ENCODE measurements at regions of chr14 and their contacts with region 1.

Region 1: DNA sequence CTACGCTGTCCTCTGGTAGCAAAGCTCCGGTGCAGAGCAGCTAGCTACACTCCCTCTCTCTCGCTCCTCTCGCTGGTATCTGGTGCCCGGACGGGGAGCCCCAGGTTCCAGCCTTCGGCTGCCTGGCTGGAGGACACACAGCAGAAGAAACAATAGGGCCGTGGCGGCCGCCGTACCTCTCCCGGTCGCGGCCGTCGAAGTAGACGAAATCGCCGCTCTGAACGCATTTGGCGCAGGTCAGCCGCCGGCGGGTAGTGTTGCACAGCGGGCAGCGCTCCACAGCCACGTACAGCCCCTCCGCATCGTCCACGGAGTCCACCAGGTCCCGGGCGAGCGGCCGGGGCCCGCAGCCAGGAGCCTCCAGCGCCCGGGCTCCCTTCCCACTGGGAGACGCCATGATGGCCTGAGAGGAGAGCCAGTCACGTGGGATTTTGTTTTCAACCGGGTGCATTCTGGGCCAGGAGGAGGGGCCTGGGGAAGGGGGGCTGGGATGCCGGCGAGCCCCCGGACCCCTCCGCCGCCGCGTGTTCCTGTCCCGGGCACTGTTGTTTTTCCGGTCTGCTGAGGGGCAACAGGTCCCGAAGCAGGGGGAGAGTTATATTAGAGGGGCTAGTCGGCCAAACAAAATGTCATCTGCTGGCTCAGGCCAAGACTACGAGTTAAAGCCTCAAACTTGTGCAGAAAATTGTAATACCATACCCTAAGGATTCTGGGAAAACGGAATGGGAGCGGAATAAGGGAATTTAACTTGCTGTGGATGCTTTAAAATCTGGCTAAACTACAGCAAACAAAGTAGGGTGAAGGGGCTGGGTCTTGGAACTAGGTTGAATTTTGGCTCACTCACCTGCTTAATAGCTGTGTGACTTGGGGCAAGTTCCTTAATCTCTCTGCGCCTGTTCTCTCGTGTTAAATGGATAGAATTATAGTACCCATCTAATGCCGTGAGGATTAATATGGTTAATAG is at the start of gene ATG14:
- DNase-seq: peak; percentile 48 to 92
- H3K4me3 ChIP-seq: peak within 1 kb of the TSS; percentile 78 to 99
- H3K27ac ChIP-seq: peak within 1 kb of the TSS; percentile 82 to 97
- H3K4me1 ChIP-seq: peaks cover 0 to 22% of the 10 kb centered on the region in 2 donors
- H3K27me3 ChIP-seq: no peaks in the 10 kb centered on the region
- CTCF ChIP-seq: no peak
- total RNA-seq, gene ATG14: 8.4 TPM

Region 2: DNA sequence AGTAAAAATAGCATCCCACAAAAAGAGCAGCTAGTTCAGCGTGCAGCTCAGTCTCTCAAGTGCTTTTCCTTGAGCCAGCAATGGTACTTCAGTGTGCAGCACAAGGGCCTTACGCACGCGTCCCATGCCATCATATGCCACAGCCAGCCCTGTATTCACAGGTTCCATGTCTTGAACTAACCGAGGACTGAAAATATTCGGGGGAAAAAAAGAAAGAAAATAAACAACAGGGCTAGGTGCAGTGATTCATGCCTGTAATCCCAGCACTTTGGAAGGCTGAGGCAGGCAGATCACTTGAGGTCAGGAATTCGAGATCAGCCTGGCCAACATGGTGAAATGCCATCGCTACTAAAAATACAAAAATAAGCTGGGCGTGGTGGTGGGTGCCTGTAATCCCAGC is 28.7 kb before region 1 on chr14:
- intact Hi-C with region 1: loop called (anchors 1 kb)
- DNase-seq: peak; percentile 39 to 85
- H3K4me3 ChIP-seq: peak overlapping the region in 1 of 2 donors; percentile 1
- H3K27ac ChIP-seq: peak overlapping the region; percentile 64 to 86
- H3K4me1 ChIP-seq: peaks cover 15 to 20% of the 10 kb centered on the region in 2 donors
- H3K27me3 ChIP-seq: no peaks in the 10 kb centered on the region
- CTCF ChIP-seq: no peak

Region 3: GRCh38 chr14:55398679-55399078 is 13.0 kb before region 1 on chr14:
- intact Hi-C with region 1: loop called (anchors 1 kb)
- DNase-seq: peak; percentile 28 to 82
- H3K4me3 ChIP-seq: no peak overlapping the region
- H3K27ac ChIP-seq: peak overlapping the region; percentile 44 to 84
- H3K4me1 ChIP-seq: peaks cover 4 to 26% of the 10 kb centered on the region in 2 donors
- H3K27me3 ChIP-seq: no peaks in the 10 kb centered on the region
- CTCF ChIP-seq: no peak

Measured in ascending aorta (tissue), 2 donors.